Naive thymus-derived CD4-positive, alpha-beta T cell (primary cell): ENCODE measurements at regions of chr14 and their contacts with region 1.

Region 1: DNA sequence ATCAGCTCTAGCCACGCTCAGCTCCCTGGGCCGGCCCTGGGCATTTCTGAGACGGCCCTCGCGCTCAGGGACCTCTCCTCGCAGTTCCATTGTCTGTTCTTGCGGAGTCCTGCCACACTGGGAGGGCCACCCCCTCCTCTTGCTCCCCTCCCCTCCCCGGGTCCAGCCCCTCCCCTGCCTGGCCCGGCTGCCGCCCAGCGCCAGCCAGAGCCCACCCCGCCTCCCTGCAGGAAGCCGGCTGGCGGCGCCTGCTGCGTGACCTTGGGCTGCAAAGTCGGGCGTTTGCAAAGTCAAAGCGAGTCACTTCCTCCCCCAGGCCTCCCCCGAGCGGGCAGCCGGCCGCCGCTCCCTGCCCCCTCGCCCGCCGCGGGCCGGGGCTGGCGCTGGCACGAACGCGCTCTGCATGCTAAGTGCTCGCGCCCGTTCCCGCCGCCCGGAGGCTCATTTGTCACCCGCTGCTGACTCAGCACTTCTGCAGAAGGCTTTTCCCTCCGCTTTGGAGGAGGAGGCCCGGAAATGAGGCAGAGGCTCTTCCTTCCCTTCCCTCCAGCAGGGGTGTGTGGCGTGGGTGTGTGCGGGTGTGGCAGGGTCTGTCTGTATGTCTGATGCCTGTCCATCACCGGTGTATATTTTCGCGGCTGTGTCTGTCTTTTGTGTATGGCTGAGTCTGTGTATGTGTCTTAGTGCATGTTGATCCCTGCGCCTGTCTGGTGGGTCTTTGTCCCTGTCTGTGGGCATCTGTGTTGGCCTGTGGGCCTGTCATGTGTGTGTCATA is 72.0 kb downstream of the IRF2BPL start:
- DNase-seq: peak; percentile 70 to 90 (median 78)
- ATAC-seq: peak; percentile 82
- H3K4me3 ChIP-seq: peak overlapping the region; percentile 74
- H3K4me3 Mint-ChIP-seq: peak overlapping the region; percentile 82 to 97 (median 93)
- H3K27ac ChIP-seq: peak overlapping the region; percentile 87
- H3K27ac Mint-ChIP-seq: peak overlapping the region; percentile 88 to 99 (median 98)
- H3K4me1 ChIP-seq: peaks cover 38 to 49% of the 10 kb centered on the region in 2 donors
- H3K4me1 Mint-ChIP-seq: peaks cover 24 to 77% (median 71%) of the 10 kb centered on the region in 7 donors
- H3K27me3 ChIP-seq: no peaks in the 10 kb centered on the region
- H3K27me3 Mint-ChIP-seq: no peaks in the 10 kb centered on the region

Region 2: DNA sequence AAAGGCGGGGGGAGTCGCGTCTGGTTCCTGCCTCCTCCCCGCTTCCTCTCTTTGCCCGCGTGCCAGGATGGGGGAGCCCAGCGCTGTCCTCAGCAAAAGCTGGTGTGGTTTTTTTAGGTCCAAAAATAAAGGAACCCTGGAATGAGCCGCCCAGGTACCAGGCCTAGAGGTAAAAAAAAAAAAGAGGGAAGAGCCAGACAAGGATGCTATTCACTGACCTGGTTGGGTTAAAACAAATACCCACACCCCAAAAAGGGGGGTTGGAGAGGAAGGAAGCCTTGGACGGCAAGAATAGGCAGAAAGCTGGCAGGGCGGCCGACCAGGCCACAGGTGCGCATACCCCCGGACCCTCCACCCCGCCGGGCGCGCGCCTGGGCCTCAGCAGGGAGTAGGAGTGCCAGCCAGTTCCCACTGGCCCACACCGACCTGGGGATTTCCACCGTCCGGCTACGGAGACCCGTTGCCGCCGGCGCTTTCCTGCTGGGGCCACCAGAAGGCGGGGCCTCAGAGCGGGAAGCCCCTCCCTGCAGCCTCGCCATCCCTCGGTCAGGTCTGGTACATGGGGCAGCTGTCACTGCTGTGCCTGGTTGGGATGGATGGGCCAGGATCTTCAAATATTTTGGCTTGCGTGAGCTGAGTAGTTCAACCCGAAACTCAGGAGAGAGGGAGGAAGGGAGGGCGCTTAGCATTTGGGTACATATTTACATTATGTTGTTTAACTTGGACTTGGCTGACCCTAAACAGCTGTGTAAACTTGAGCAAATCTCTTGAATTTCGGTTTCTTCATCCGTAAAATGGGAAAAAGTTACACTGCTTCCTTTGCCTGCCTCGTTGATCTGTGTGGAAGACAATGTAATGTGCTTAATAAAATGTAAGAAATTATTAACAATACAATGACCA is 77.4 kb after region 1 on chr14:
- CTCF ChIA-PET with region 1: interaction called, 4 read pairs
- POLR2A ChIA-PET with region 1: interaction called, 76 read pairs
- intact Hi-C with region 1: loop called (anchors 1 kb)
- DNase-seq: peak in 7 of 9 donors; percentile 32 to 89 (median 47)
- ATAC-seq: peak; percentile 76
- H3K4me3 ChIP-seq: peak overlapping the region; percentile 79
- H3K4me3 Mint-ChIP-seq: peak overlapping the region; percentile 81 to 93 (median 90)
- H3K27ac ChIP-seq: peak overlapping the region; percentile 95
- H3K27ac Mint-ChIP-seq: peak overlapping the region; percentile 92 to 98 (median 94)
- H3K4me1 ChIP-seq: peaks cover 37 to 67% of the 10 kb centered on the region in 2 donors
- H3K4me1 Mint-ChIP-seq: peaks cover 45 to 85% (median 78%) of the 10 kb centered on the region in 7 donors
- H3K27me3 ChIP-seq: no peaks in the 10 kb centered on the region
- H3K27me3 Mint-ChIP-seq: no peaks in the 10 kb centered on the region

Region 3: GRCh38 chr14:77040059-77040740 is 83.7 kb after region 1 on chr14:
- CTCF ChIA-PET with region 1: interaction called, 12 read pairs
- POLR2A ChIA-PET with region 1: interaction called, 76 read pairs
- intact Hi-C with region 1: loop called (anchors 1 kb)
- DNase-seq: peak; percentile 86 to 99 (median 99)
- ATAC-seq: peak; percentile 87
- H3K4me3 ChIP-seq: peak overlapping the region; percentile 78
- H3K4me3 Mint-ChIP-seq: peak overlapping the region; percentile 76 to 97 (median 87)
- H3K27ac ChIP-seq: peak overlapping the region; percentile 97
- H3K27ac Mint-ChIP-seq: peak overlapping the region; percentile 97 to 100 (median 99)
- H3K4me1 ChIP-seq: peaks cover 57 to 77% of the 10 kb centered on the region in 2 donors
- H3K4me1 Mint-ChIP-seq: peaks cover 50 to 97% (median 89%) of the 10 kb centered on the region in 7 donors
- H3K27me3 ChIP-seq: no peaks in the 10 kb centered on the region
- H3K27me3 Mint-ChIP-seq: no peaks in the 10 kb centered on the region